ENCODE measurements at regions of chr10 and their contacts with region 1.

Region 1: DNA sequence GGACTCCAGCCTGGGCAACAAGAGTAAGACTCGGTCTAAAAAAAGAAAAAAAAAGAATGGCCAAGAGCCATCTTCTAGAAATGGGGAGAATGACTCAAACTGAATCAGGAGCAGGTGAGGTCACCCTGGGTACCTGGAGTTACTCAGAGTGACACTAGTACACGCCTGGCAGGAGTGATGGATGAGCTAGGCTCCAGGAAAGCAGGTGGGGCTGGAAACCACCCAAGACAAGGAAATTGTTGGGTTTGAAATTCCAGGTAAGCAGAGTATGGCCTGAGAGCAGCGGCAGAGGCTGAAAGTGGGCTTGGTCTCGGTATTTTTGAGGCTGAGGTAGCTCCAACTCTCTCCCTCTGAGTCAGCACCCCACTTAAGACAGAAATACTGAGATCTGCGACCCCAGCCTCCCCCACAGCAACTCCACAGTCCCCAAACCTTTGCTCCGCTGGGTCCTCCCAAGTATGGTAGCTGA is 18.5 kb downstream of the DDIT4 start:
- DNase-seq: peak in 1 of 2 experiments; percentile 76
- ATAC-seq: peak; percentile 31 to 74
- H3K4me3 ChIP-seq: no peak overlapping the region
- H3K27ac ChIP-seq: peak overlapping the region; percentile 98 to 100
- H3K4me1 ChIP-seq: peaks cover 55% of the 10 kb centered on the region
- CTCF ChIP-seq: no peak
- EP300 ChIP-seq: peak in 1 of 2 experiments; percentile 33; a peak in 2 of 5 replicates
- POLR2A ChIP-seq: no peak
- RAD21 ChIP-seq: no peak

Region 2: GRCh38 chr10:72133517-72133916 is 158.7 kb before region 1 on chr10:
- CTCF ChIA-PET with region 1: no interaction called
- POLR2A ChIA-PET with region 1: no interaction called
- DNase-seq: no peak
- ATAC-seq: peak in 1 of 2 experiments; percentile 44; a peak in 3 of 6 replicates
- H3K4me3 ChIP-seq: no peak overlapping the region
- H3K27ac ChIP-seq: peak overlapping the region; percentile 10 to 56; a peak in 3 of 6 replicates
- H3K4me1 ChIP-seq: peaks cover 23% of the 10 kb centered on the region
- CTCF ChIP-seq: no peak
- EP300 ChIP-seq: no peak
- POLR2A ChIP-seq: no peak
- RAD21 ChIP-seq: no peak

Region 3: GRCh38 chr10:72278668-72279393 is 13.4 kb before region 1 on chr10:
- CTCF ChIA-PET with region 1: interaction called, 46 read pairs
- POLR2A ChIA-PET with region 1: interaction called, 126 read pairs
- DNase-seq: peak in 1 of 2 experiments; percentile 52
- ATAC-seq: no peak
- H3K4me3 ChIP-seq: no peak overlapping the region
- H3K27ac ChIP-seq: peak overlapping the region; percentile 98
- H3K4me1 ChIP-seq: peaks cover 39% of the 10 kb centered on the region
- CTCF ChIP-seq: peak; percentile 26; the same call in 1 of the 3 replicates
- EP300 ChIP-seq: no peak
- POLR2A ChIP-seq: no peak
- RAD21 ChIP-seq: no peak

Region 4: GRCh38 chr10:72593963-72594362 is 301.7 kb after region 1 on chr10:
- CTCF ChIA-PET with region 1: no interaction called
- POLR2A ChIA-PET with region 1: no interaction called
- DNase-seq: no peak
- ATAC-seq: no peak
- H3K4me3 ChIP-seq: no peak overlapping the region
- H3K27ac ChIP-seq: no peak overlapping the region
- H3K4me1 ChIP-seq: no peaks in the 10 kb centered on the region
- CTCF ChIP-seq: no peak
- EP300 ChIP-seq: no peak
- POLR2A ChIP-seq: no peak
- RAD21 ChIP-seq: no peak